Activated CD4-positive, alpha-beta T cell treated with anti-CD3 and anti-CD28 coated beads, Interleukin-2, amount 10 ng/mL, durations not matched to agents 24 days and 14 days (primary cell): ENCODE measurements at regions of chr2 and their contacts with region 1.

Region 1: GRCh38 chr2:64873472-64873924 is 115.7 kb upstream of the SLC1A4 start:
- DNase-seq: peak; percentile 95
- H3K4me3 Mint-ChIP-seq: no peak overlapping the region
- H3K27ac Mint-ChIP-seq: no peak overlapping the region
- H3K4me1 Mint-ChIP-seq: peaks cover 11% of the 10 kb centered on the region
- H3K27me3 Mint-ChIP-seq: peaks cover 24% of the 10 kb centered on the region

Region 2: GRCh38 chr2:64586883-64587481 is 286.5 kb before region 1 on chr2:
- intact Hi-C with region 1: loop called (anchors 1 kb)
- DNase-seq: peak; percentile 66
- H3K4me3 Mint-ChIP-seq: no peak overlapping the region
- H3K27ac Mint-ChIP-seq: no peak overlapping the region
- H3K4me1 Mint-ChIP-seq: peaks cover 19% of the 10 kb centered on the region
- H3K27me3 Mint-ChIP-seq: no peaks in the 10 kb centered on the region